ENCODE measurements at regions of chr17 and their contacts with region 1.

Region 1: DNA sequence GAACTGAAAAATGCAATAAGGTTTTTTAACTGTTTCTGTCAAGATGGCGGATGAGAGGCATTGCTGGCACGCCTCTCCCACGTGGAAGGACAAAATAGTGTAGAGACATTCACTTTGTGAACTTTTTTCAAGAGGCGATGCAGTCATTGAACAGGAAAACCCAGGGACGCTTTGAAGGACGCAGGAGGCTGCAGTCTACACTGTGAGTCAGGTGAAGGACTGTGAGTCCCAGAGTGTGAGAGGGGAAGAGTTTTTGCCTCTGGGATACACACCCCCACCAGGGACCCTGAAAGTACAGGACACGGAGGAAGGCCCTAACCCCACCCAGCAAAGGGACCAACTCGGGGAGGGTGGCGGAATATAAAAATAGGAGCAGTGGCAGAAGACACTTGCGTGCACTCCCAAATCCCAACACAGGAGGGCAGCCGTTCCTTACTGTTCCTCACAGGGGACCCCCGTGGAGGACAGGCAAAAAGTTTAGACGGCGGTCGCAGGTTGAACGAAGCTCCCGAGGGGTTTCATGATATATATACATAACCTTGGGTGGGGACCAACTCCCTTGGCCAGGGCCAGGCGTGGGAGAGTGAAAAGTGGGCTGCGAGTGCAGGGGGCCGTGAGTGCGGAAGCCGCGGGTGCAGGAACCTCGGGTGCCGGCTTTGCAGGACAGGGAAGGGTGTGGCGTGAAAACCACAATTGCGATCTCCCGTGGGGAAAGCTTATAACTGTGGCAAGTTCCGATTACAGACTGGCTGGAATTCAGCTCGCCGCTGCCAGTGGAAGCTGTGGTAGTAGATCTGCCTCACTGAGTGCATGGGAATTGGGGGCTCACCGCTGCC is 82.0 kb upstream of the ALOX12 start:
- DNase-seq: peak; percentile 77
- ATAC-seq: peak; percentile 89
- H3K4me3 Mint-ChIP-seq: peak overlapping the region; percentile 83
- H3K27ac Mint-ChIP-seq: no peak overlapping the region
- H3K4me1 Mint-ChIP-seq: peaks cover 18% of the 10 kb centered on the region
- H3K27me3 Mint-ChIP-seq: peaks cover 24% of the 10 kb centered on the region
- CTCF ChIP-seq: peak; percentile 38

Region 2: DNA sequence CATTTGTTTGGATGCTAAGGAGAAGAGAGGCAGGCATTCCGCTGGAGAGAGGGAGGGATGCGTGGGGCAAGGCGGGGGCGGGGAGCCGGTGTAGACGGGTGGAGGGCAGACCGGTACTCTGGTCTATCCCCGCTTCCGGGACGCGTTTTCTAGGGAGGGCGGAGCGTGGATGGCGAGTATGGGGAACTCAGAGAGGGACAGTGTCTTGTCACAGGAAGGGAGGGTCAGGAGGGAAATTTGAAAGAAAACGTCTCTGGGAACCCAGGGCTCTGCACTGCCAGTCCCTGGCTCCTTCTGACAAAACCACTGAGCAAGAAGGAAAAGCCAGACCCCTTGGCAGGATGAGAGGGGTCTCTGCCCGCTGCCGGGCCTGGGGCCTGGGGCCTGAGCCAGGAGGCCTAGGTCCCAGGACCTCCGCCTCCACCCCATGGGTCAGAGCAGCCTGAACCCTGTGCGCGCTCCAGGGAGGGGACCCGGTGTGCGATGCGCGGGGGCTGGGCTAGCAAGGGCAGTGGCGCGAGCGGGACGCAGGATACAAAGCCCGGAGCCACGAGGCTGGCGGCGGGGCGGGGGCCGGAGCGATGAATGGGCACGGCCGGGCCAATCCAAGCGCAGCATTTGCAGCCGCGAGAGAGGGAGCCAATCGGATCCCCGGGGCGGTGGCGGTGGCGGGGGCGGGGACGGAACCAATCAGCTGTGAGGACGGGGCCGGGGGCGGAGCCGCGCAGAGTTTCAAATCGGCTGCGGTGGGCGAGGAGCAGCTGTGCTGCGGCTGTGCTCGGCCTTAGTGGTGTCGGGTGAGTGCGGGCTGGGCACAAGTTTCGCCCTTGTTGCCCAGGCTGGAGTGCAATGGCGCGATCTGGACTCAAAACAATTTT is 469.9 kb before region 1 on chr17 and contains the start of gene PIMREG:
- CTCF ChIA-PET with region 1: no interaction called
- POLR2A ChIA-PET with region 1: no interaction called
- intact Hi-C with region 1: no loop called
- DNase-seq: peak; percentile 83
- ATAC-seq: peak; percentile 94
- H3K4me3 Mint-ChIP-seq: peak within 1 kb of the TSS; percentile 86
- H3K27ac Mint-ChIP-seq: peak within 1 kb of the TSS; percentile 74
- H3K4me1 Mint-ChIP-seq: peaks cover 13% of the 10 kb centered on the region
- H3K27me3 Mint-ChIP-seq: peaks cover 14% of the 10 kb centered on the region
- CTCF ChIP-seq: no peak
- total RNA-seq, gene PIMREG: 0.27 and 0.69 TPM in 2 replicates

Region 3: DNA sequence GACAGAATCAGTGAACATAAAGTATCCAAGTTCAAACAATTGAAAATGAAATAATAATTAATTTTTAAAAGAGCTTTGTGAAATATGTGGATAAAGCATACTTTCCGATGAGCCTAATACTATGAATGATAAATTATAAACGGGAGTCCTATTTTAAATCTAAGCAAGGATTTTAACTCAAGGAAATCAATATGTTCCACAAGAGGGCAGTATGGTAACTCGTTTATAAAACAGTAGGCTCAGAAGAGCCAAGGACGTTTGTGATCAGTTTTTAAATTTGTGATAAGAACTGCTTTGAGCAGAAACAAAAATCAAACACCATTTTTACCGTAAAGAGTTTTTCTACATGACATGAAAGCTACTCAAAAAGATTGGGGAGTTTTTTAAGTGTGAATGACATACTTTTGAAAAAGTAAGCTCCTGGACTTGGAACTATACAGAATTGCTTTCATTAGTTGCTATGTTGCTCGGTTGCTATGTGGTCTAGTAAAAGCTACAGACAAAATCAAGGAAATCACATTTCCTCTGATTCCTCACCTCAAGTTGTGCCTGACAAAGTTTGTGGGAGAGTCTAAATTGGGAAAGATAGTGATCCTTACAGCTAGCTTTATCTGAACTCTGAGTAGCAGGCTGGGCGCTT is 70.5 kb before region 1 on chr17:
- CTCF ChIA-PET with region 1: no interaction called
- POLR2A ChIA-PET with region 1: no interaction called
- intact Hi-C with region 1: loop called (anchors 5 kb)
- DNase-seq: no peak
- ATAC-seq: peak; percentile 25
- H3K4me3 Mint-ChIP-seq: no peak overlapping the region
- H3K27ac Mint-ChIP-seq: no peak overlapping the region
- H3K4me1 Mint-ChIP-seq: no peaks in the 10 kb centered on the region
- H3K27me3 Mint-ChIP-seq: peaks cover 44% of the 10 kb centered on the region
- CTCF ChIP-seq: peak; percentile 36

Region 4: DNA sequence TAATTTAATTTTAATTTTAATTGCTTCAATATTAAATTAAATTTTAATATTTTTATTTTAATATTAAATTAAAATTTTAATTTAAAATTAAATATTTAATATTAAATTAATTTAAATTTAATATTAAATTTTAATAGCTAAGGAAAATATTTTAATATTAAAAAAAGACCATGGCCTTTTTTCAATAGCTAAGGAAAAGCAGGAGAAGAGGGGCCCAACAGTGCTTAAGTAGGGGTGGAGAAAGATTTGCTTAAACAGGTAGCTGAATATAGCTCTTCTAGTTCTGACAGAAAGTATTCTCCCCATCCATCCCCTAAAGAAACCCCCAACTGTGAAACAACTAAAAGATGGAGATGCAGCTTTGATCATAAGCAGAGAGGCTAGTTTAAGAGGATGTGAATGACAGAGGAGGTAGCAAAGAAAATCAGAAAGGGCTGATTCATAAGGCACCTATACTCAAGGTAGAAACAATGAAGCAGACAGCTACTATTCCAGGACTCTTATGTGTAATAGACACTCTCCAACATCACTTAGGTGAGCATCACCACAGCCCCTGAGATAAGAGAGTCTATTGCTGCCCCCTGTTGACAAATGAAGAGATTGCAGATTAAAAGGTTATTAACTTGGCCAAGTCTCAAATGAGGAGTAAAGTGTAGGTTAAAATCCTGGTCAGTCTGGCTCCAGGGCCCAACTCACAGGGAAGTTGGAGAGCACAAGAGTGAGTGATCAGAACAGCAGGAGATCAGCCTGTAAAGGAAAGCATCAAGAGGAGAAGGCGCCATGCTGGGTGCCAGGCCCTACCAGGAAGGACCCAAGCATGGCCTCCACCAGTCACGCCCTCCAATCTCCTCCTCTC is 90.8 kb after region 1 on chr17:
- CTCF ChIA-PET with region 1: interaction called, 118 read pairs
- POLR2A ChIA-PET with region 1: interaction called, 5 read pairs
- intact Hi-C with region 1: loop called (anchors 1 kb)
- DNase-seq: no peak
- ATAC-seq: peak; percentile 95
- H3K4me3 Mint-ChIP-seq: no peak overlapping the region
- H3K27ac Mint-ChIP-seq: peak overlapping the region; percentile 54
- H3K4me1 Mint-ChIP-seq: peaks cover 22% of the 10 kb centered on the region
- H3K27me3 Mint-ChIP-seq: no peaks in the 10 kb centered on the region
- CTCF ChIP-seq: peak; percentile 50

Region 5: GRCh38 chr17:7021993-7022778 is 108.4 kb after region 1 on chr17:
- CTCF ChIA-PET with region 1: interaction called, 48 read pairs
- POLR2A ChIA-PET with region 1: interaction called, 7 read pairs
- intact Hi-C with region 1: loop called (anchors 1 kb)
- DNase-seq: peak; percentile 87
- ATAC-seq: peak; percentile 77
- H3K4me3 Mint-ChIP-seq: peak overlapping the region; percentile 82
- H3K27ac Mint-ChIP-seq: peak overlapping the region; percentile 85
- H3K4me1 Mint-ChIP-seq: peaks cover 27% of the 10 kb centered on the region
- H3K27me3 Mint-ChIP-seq: no peaks in the 10 kb centered on the region
- CTCF ChIP-seq: peak; percentile 63